Left cardiac atrium (tissue), 4 donors: ENCODE measurements at regions of chr20 and their contacts with region 1.

Region 1: DNA sequence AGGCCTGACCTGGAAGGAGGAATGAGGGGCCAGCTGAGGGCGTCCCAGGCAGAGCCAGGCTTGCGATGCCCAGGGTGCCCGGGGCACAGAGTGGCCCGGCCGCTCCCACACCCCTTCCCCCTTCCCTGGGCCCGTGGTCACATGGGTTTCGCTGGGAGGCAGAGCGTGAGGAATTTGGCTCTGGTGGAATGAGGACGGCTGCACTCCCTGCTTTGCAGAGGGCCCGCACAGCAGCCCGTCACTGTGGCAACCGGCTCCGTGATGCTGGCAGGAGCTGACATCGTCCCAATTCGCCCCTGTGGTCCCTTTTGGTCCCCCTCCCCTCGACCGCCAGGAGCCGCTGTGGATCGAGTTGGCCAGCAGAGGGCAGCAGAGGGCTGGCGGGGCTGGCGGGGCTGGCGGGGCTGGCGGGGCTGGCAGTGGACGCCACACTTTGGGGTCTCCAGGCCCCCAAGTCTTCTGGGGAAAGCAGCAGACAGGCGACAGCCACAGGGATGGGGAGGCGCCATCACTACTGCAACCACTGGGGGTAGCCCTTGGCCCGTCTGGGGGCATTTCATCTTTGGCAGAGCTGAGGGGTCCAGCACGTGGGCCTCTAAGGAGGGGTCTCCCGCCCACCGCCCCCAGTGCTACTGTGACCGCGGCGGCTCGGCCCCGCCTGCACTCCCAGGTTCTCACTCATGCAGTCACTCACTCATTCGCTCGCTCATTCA is 49.6 kb upstream of the BHLHE23 start:
- DNase-seq: peak; percentile 28
- ATAC-seq: peak; percentile 42 to 60

Region 2: GRCh38 chr20:63178889-63179686 is 122.7 kb after region 1 on chr20:
- intact Hi-C with region 1: loop called (anchors 5 kb)
- DNase-seq: peak; percentile 39
- ATAC-seq: peak; percentile 12 to 52

Region 3: DNA sequence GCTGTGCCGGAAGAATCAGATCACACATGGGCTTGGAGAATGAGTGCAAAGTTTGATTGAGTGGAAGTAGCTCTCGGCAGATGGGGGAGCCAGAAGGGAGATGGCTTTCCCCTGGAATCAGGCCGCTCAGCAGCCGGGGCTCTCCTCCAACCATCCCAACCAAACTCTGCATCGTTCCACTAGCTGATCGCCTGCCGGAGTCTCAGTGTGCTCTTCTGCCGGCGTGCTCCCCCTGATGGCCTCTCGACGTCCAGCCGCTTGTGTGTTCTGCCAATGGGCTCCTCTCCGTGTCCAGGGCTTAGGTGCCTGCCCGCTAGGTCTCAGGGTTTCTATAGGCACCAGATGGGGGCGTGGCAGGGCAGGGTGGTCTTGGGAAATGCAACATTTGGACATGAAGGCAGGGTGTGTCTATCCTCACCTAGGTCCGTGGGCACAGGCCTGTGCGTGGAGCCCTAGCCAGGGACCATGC is 174.4 kb after region 1 on chr20:
- intact Hi-C with region 1: loop called in 1 of 2 experiments (anchors 5 kb)
- DNase-seq: peak; percentile 67
- ATAC-seq: peak; percentile 70 to 76